Dorsolateral prefrontal cortex (tissue), 120 donors: ENCODE measurements at regions of chr2 and their contacts with region 1.

Region 1: DNA sequence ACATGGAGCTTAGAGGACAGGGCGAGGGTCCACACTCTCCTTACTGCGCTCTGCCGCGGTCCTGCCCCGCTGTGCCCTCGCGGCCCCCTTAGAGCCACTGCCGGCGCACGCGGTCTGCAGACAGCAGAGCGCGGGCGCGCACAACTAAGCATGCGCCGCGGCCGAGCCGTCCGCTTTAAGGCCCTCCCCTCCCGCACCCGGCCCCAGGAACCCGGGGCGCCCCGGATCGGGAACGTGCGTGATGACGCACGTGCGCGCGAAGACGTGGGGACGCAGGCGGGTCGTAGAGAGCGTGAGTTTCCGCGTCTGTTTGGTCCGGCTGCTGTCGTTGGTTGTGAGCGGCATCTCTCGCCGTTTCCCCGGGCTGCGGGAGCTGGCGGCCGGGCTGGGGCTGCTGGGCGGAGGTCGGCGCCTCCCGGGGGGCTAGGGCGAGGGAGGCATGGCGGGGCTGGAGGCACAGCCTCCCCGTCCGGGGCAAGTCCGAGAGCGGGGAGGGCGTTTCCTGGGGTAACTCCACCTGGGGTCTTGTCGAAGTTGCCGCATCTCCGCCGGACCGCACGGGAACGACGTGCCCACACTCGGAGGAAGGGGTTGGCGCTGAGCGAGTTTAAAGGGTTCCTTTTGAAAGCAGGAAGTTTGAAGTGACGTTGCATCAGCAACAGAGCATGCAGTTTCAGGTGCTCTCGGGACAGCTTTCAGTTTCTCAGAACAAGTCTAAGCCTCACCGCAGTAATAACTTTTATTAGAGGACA is at the start of gene RHBDD1:
- DNase-seq: peak; percentile 85 to 97 (median 94)
- H3K4me3 ChIP-seq: peak within 1 kb of the TSS; percentile 60 to 99 (median 85)
- H3K27ac ChIP-seq: peak within 1 kb of the TSS; percentile 41 to 96 (median 90)
- H3K27me3 ChIP-seq: no peaks in the 10 kb centered on the region
- CTCF ChIP-seq: peak in 38 of 56 donors; percentile 3 to 59 (median 35)
- total RNA-seq, gene RHBDD1: 36.7 to 99.9 (median 61.0) TPM

Region 2: DNA sequence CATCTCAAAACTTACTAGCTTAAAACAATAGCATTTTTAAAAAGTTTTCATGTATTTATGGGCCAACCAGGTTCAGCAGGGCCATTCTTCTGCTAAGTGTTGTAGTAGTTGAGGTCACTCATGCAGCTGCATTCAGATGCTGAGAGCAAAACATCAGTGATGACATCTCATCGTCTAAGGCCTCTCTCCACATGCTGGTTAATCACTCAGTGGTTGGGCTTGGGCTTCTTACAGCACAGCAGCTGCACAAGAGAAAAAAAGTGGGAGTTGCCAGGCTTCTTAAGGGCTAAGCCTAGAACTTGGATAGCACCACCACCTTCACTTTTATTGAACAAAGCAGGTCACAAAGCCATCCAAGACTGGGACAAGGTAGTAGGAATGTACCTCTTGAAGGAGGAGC is 226.6 kb before region 1 on chr2:
- intact Hi-C with region 1: no loop called
- DNase-seq: no peak
- H3K4me3 ChIP-seq: no peak overlapping the region
- H3K27ac ChIP-seq: no peak overlapping the region
- H3K27me3 ChIP-seq: peaks cover 0 to 4% (median 0%) of the 10 kb centered on the region in 45 donors
- CTCF ChIP-seq: no peak

Region 3: GRCh38 chr2:226794751-226795171 is 41.2 kb before region 1 on chr2:
- intact Hi-C with region 1: no loop called
- DNase-seq: no peak
- H3K4me3 ChIP-seq: peak overlapping the region in 57 of 59 donors; percentile 3 to 89 (median 70)
- H3K27ac ChIP-seq: peak overlapping the region in 47 of 59 donors; percentile 13 to 84 (median 57)
- H3K27me3 ChIP-seq: no peaks in the 10 kb centered on the region
- CTCF ChIP-seq: no peak

Region 4: GRCh38 chr2:226875438-226876225 is 39.7 kb after region 1 on chr2:
- intact Hi-C with region 1: loop called in 1 of 2 experiments (anchors 5 kb)
- DNase-seq: no peak
- H3K4me3 ChIP-seq: peak overlapping the region in 2 of 59 donors; percentile 1 to 23
- H3K27ac ChIP-seq: peak overlapping the region in 36 of 59 donors; percentile 7 to 75 (median 42)
- H3K27me3 ChIP-seq: no peaks in the 10 kb centered on the region
- CTCF ChIP-seq: no peak

Region 5: DNA sequence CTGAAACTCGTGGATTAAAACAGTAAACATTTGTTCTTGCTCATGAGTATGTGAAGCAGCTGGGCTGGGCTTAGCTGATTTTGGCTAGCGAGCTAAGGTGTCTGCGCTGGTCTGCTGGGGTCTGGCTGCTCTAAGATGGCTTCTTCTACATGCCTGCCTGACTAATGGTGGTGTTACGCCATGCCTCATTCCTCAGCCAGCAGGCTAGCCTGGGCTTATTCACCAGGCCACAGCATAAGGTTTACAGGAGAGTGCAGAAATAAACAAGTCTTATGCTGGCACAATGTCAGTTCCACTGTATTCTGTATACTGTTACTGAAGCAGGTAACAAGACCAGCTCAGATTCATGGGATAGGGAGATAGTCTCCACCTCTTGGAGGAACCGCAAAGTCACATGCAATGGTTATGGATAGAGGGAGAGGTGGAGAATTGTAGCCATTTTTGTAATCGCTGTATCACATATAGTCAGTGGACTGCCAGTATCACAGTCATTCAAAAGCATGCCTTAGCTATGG is 79.9 kb after region 1 on chr2:
- intact Hi-C with region 1: loop called in 1 of 2 experiments (anchors 2 kb)
- DNase-seq: no peak
- H3K4me3 ChIP-seq: no peak overlapping the region
- H3K27ac ChIP-seq: no peak overlapping the region
- H3K27me3 ChIP-seq: no peaks in the 10 kb centered on the region
- CTCF ChIP-seq: no peak